ENCODE measurements at regions of chr10 and their contacts with region 1.

Region 1: DNA sequence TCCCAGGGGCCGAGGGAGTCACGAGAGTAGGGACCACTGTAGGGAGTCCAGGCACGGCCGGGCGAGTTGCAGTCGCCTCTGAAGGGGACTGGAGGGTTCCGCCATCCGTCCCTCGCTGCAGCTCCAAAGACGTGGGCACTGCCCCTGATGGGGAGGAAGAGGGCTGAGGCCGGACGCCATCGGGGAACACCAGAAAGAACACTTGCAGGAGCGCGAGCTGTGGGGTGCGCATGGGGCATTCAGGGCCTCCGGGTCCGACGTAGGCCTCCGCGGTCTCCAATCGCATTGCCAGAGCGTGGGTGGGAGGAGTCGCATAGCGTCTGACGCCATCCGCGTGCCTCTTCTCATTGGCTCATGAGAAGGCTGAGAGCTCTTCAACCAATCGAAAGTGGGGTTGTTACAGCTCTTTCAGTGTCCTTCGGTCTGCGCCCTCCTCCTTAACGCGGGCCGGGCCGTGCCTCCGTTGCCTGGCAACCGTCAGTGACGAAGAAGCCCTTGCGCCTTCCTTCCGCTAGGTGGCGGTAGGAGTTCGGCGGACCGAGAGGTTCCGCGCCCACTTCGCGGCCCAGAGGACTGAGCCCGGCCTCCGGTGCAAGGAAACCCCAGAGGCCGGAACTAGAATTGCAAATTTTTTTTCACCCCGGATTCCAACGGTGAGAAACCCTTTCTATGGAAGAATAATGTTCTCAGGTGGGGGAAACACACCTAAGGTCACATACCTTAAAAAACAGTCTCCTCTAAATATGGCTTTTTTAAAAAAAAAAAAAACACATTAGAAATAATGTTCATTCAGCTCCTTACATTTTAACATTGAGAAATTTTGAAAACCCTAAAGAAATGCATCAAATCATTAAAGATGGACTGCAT is at the start of gene TCTN3:
- DNase-seq: peak; percentile 100
- ATAC-seq: peak; percentile 96
- H3K4me3 ChIP-seq: peak within 1 kb of the TSS; percentile 87
- H3K27ac ChIP-seq: peak within 1 kb of the TSS; percentile 79
- H3K4me1 ChIP-seq: peaks cover 13% of the 10 kb centered on the region
- H3K27me3 ChIP-seq: no peaks in the 10 kb centered on the region
- CTCF ChIP-seq: peak; percentile 97 to 100 (median 99); a peak in 5 of 6 replicates
- EP300 ChIP-seq: 0 out of 4 replicates have a peak, but pooled peaks of 1 of the 2 experiments have one; percentile 11
- POLR2A ChIP-seq: peak; percentile 89
- RAD21 ChIP-seq: peak; percentile 100
- polyA plus RNA-seq, gene TCTN3: 20.0 to 24.0 TPM

Region 2: DNA sequence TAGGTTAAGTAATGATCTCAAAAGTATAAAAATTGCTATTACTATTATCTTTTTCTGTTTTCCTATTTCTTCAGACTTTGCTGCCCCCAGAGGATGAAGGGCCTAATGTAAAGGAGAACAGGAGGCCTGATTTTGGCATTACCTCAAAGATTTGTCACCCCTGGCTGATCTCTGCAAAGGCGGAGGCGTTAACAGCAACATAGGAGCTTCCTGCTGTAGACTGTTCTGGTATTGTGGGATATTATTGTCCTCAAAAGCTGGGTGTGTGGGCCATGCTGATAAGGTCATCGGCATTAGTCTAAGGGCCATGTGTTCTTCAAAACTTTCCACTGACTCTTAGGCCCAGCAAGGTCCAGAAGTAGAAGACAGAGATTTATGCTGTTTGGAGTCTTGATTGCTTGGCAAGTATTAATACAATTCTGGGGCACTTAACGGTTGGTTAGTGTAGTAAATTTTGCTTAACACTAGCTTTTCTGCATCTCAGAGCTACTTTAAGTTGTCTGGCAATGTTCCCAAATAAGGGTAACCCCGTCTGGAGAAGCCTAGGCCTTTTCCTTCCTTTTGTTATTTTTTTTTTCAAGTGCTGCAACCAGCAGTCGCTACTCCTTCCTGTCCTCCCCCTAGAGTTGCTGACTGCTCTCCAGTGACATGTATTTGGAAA is 48.0 kb after region 1 on chr10:
- CTCF ChIA-PET with region 1: interaction called, 21 read pairs
- POLR2A ChIA-PET with region 1: interaction called, 3 read pairs
- RAD21 ChIA-PET with region 1: interaction called, 8 read pairs
- SMC1A ChIA-PET with region 1: interaction called, 20 read pairs
- in situ Hi-C with region 1: loop called (anchors 5 kb)
- intact Hi-C with region 1: no loop called
- DNase-seq: peak; percentile 60
- ATAC-seq: peak; percentile 60
- H3K4me3 ChIP-seq: peak overlapping the region; percentile 27
- H3K27ac ChIP-seq: peak overlapping the region; percentile 85
- H3K4me1 ChIP-seq: peaks cover 9% of the 10 kb centered on the region
- H3K27me3 ChIP-seq: no peaks in the 10 kb centered on the region
- CTCF ChIP-seq: peak in 2 of 3 experiments; percentile 15 to 45; a peak in 3 of 6 replicates
- EP300 ChIP-seq: no peak
- POLR2A ChIP-seq: peak; percentile 43; the same call in 1 of the 2 replicates
- RAD21 ChIP-seq: peak; percentile 71

Region 3: GRCh38 chr10:95814011-95814727 is 120.3 kb after region 1 on chr10:
- CTCF ChIA-PET with region 1: interaction called, 20 read pairs
- POLR2A ChIA-PET with region 1: interaction called, 5 read pairs
- RAD21 ChIA-PET with region 1: interaction called, 53 read pairs
- SMC1A ChIA-PET with region 1: interaction called, 21 read pairs
- in situ Hi-C with region 1: no loop called
- intact Hi-C with region 1: no loop called
- DNase-seq: no peak
- ATAC-seq: peak; percentile 6; the same call in 1 of the 3 replicates
- H3K4me3 ChIP-seq: no peak overlapping the region
- H3K27ac ChIP-seq: peak overlapping the region; percentile 26; the same call in 1 of the 2 replicates
- H3K4me1 ChIP-seq: peaks cover 44% of the 10 kb centered on the region
- H3K27me3 ChIP-seq: no peaks in the 10 kb centered on the region
- CTCF ChIP-seq: no peak
- EP300 ChIP-seq: no peak
- POLR2A ChIP-seq: peak; percentile 30; the same call in 1 of the 2 replicates
- RAD21 ChIP-seq: no peak

Region 4: DNA sequence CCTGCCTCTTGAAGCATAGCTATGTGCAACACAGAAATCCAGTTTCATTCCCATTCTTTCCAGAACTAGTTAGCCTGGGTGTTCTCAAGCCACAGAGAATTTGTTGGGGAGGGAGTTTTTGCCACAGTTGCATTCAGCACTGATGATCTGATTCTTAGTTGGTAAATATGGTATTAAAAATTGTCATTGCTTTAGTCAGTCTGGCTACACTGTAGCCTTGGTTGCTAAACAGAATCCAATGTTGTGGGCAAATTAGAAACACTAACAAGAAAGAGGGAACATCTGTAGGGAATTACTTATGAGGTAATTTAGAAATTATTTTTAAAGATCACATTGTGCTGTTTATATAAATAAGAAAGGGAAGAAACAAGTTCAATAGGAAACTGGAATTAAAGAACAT is 156.9 kb after region 1 on chr10:
- CTCF ChIA-PET with region 1: interaction called, 337 read pairs
- POLR2A ChIA-PET with region 1: no interaction called
- RAD21 ChIA-PET with region 1: interaction called, 324 read pairs
- SMC1A ChIA-PET with region 1: interaction called, 267 read pairs
- in situ Hi-C with region 1: no loop called
- intact Hi-C with region 1: no loop called
- DNase-seq: no peak
- ATAC-seq: no peak
- H3K4me3 ChIP-seq: no peak overlapping the region
- H3K27ac ChIP-seq: no peak overlapping the region
- H3K4me1 ChIP-seq: no peaks in the 10 kb centered on the region
- H3K27me3 ChIP-seq: no peaks in the 10 kb centered on the region
- CTCF ChIP-seq: no peak
- EP300 ChIP-seq: no peak
- POLR2A ChIP-seq: no peak
- RAD21 ChIP-seq: no peak

Region 5: DNA sequence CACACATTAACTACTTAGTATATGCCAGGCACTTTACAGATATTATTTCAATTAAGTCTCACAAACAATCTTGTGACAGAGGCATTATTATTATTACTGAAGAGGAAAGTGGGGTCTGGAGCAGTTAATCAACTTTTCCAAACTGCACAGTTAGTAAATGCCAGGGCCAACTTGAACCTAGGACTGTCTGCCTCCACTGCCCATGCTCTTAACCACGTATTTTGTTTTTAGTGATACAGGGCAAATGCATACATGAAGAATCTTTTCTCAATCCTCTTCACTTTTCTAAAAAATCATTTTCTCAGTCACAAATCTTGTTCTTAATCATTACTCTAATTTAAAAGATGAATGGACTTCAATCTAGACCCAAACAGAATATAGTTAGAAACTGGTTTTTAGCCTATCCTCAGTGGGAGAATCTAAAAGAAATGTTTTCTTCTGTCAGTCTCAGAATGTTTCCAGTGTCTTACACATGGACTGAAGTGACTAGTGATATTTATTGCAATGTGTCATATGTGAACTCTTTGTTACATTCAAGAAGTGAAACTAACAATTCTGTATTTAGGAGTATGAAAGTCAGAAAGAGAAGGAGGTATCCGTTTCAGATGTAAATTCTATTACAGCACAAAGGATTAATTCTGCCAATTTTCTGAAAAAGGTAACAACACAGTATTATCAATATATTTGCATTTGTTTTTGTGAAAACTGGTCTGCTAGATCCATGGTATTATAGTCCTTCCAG is 294.0 kb after region 1 on chr10:
- CTCF ChIA-PET with region 1: interaction called, 4 read pairs
- POLR2A ChIA-PET with region 1: interaction called, 3 read pairs
- RAD21 ChIA-PET with region 1: interaction called, 3 read pairs
- SMC1A ChIA-PET with region 1: interaction called, 12 read pairs
- in situ Hi-C with region 1: no loop called
- intact Hi-C with region 1: loop called (anchors 10 kb)
- DNase-seq: peak; percentile 45
- ATAC-seq: peak; percentile 97
- H3K4me3 ChIP-seq: peak overlapping the region; percentile 46
- H3K27ac ChIP-seq: peak overlapping the region; percentile 78
- H3K4me1 ChIP-seq: peaks cover 15% of the 10 kb centered on the region
- H3K27me3 ChIP-seq: no peaks in the 10 kb centered on the region
- CTCF ChIP-seq: no peak
- EP300 ChIP-seq: peak in 1 of 2 experiments; percentile 51; a peak in 2 of 4 replicates
- POLR2A ChIP-seq: no peak
- RAD21 ChIP-seq: no peak

Measured in GM12878 (cell line).